Astrocyte of the spinal cord (primary cell): ENCODE measurements at regions of chr15 and their contacts with region 1.

Region 1: GRCh38 chr15:83011271-83012075 is at the start of gene C15orf40:
- DNase-seq: peak; percentile 90
- H3K4me3 ChIP-seq: peak within 1 kb of the TSS; percentile 95
- CTCF ChIP-seq: peak; percentile 71

Region 2: GRCh38 chr15:82540055-82540983 is 471.2 kb before region 1 on chr15 and contains the start of gene RPS17:
- in situ Hi-C with region 1: loop called (anchors 25 kb)
- DNase-seq: peak; percentile 97
- H3K4me3 ChIP-seq: peak within 1 kb of the TSS; percentile 100
- CTCF ChIP-seq: peak; percentile 89

Region 3: DNA sequence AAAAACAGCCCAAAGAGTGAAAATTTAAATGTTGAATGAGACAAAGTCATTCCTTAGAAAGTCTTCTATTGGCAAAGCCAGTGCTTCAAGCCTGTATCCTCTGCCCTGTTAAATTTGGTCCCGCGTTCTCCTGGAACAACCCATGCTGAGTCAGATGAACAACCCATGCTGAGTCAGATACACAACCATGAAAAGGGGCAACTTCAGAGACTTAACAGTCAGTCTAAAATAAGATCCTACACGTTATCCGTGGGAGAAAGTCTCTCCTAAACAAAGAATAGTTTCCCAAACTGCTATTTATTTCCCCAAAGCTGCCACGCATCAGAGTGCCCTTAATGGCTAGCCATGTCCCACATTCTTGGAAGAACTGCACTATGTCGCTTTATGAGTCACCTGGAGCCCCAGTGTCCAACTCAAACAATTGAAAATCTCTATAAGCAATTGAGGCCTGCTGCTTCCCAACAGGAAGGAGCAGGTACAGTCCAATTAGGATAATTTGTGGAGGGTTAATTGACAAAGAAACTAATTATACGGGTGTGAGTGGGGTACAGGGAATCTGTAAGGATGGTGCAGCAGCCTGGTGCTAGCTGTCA is 136.0 kb before region 1 on chr15:
- in situ Hi-C with region 1: no loop called
- DNase-seq: peak; percentile 59
- H3K4me3 ChIP-seq: no peak overlapping the region
- CTCF ChIP-seq: no peak